H1 (cell line): ENCODE measurements at regions of chr15 and their contacts with region 1.

Region 1: GRCh38 chr15:59632714-59633113 is 21.1 kb downstream of the GCNT3 start:
- DNase-seq: peak; percentile 33 to 64
- H3K4me3 ChIP-seq: no peak overlapping the region
- H3K27ac ChIP-seq: no peak overlapping the region
- H3K4me1 ChIP-seq: no peaks in the 10 kb centered on the region
- H3K27me3 ChIP-seq: no peaks in the 10 kb centered on the region
- CTCF ChIP-seq: peak; percentile 58 to 81 (median 81)
- EP300 ChIP-seq: no peak
- POLR2A ChIP-seq: no peak
- RAD21 ChIP-seq: peak; percentile 80 to 86

Region 2: GRCh38 chr15:59516655-59517461 is 115.9 kb before region 1 on chr15:
- CTCF ChIA-PET with region 1: interaction called, 10 read pairs
- POLR2A ChIA-PET with region 1: no interaction called
- DNase-seq: no peak
- H3K4me3 ChIP-seq: no peak overlapping the region
- H3K27ac ChIP-seq: no peak overlapping the region
- H3K4me1 ChIP-seq: no peaks in the 10 kb centered on the region
- H3K27me3 ChIP-seq: no peaks in the 10 kb centered on the region
- CTCF ChIP-seq: no peak
- EP300 ChIP-seq: no peak
- POLR2A ChIP-seq: no peak
- RAD21 ChIP-seq: no peak

Region 3: DNA sequence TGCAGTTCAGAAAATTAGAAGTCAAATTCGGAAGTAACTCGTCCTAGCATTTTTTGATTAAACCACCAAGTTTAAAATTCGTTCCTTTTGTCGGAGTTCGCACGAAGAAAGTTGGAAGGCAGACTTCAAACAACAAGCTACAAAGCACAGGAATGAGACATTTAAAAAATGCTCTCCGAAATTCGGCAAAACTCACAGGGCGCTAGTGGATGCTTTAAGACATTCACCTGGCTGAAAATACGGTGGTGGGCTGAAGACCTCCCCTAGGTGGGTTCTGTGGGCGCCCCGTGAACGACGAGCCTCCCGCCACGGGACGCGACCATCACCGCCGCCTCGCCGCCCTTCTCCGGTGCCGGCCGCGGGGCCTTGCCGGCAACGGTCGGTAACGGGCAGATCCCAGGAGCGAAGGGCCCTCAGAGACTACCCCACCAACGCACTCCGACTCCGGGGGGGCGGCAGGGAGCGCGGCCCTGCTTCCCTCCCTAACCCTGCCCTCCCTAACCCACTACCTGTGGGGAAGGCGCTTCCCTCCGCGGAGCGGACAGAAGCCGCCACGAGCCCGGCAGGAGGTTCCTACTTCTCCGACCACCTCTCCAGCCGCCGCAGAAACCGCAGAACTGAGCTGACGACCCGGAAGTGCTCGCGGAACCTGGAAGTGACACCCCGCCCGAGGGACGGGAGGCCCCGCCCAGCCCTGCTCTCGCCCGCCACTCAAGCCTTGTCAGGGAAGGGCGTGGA is 24.4 kb after region 1 on chr15 and contains the start of gene GTF2A2:
- CTCF ChIA-PET with region 1: interaction called, 10 read pairs
- POLR2A ChIA-PET with region 1: interaction called, 5 read pairs
- DNase-seq: peak; percentile 84 to 93
- H3K4me3 ChIP-seq: peak within 1 kb of the TSS; percentile 84 to 95 (median 90)
- H3K27ac ChIP-seq: peak within 1 kb of the TSS; percentile 41
- H3K4me1 ChIP-seq: peaks cover 0 to 7% (median 0%) of the 10 kb centered on the region in 4 experiments; a peak in 1 of 7 replicates
- H3K27me3 ChIP-seq: no peaks in the 10 kb centered on the region
- CTCF ChIP-seq: no peak
- EP300 ChIP-seq: no peak
- POLR2A ChIP-seq: peak; percentile 46 to 86
- RAD21 ChIP-seq: no peak
- total RNA-seq, gene GTF2A2: 137 and 161 TPM in 2 replicates